Activated CD8-positive, alpha-beta T cell treated with anti-CD3 and anti-CD28 coated beads for 36 hours (primary cell): ENCODE measurements at regions of chr11 and their contacts with region 1.

Region 1: DNA sequence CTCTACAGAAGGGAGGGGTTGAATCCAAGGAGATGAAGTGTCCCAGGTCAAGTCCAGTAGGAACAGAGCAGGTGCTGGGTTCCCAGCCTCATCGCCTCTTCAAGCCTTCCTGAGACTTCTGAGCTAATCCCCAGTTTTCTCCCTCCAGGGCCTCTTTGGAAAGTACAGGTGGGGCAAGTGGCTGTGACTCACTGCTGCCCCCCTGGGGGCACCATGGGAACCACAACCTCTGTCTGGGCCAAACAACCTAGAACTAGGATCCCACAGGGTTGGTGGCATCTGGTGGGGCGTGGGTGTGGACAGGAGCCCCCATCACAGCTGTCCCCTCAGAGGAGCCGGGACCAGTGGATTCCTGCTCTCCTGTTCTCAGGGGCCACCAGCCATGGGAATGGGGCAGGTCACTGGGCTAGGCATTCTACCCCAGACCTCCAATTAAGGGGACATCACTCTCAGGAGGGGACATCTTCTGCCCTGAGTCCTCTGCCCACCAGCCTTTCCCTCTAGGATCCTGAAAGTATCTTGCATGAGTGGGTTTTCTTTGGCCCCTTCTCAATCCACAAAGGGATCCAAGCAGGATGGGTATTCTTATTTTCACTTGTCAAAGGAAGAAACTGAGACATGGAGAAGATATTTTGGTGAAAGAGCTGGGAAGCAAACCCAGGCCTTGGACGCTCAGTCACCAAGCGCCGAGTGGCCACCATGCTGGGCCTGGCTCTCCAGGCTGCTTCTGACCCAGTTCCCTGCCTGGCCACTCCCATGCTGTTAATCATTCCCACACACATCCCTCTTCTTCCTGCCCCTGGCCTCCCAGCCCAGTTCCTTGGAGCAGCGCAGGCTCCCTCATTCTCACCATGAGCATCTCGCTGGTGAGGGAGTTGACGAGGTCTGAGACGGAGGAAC is 23.8 kb downstream of the LRRC10B start:
- DNase-seq: peak; percentile 62
- ATAC-seq: peak; percentile 94
- H3K4me3 Mint-ChIP-seq: no peak overlapping the region
- H3K27ac Mint-ChIP-seq: no peak overlapping the region
- H3K4me1 Mint-ChIP-seq: no peaks in the 10 kb centered on the region
- H3K27me3 Mint-ChIP-seq: peaks cover 14% of the 10 kb centered on the region
- CTCF ChIP-seq: peak; percentile 84

Region 2: DNA sequence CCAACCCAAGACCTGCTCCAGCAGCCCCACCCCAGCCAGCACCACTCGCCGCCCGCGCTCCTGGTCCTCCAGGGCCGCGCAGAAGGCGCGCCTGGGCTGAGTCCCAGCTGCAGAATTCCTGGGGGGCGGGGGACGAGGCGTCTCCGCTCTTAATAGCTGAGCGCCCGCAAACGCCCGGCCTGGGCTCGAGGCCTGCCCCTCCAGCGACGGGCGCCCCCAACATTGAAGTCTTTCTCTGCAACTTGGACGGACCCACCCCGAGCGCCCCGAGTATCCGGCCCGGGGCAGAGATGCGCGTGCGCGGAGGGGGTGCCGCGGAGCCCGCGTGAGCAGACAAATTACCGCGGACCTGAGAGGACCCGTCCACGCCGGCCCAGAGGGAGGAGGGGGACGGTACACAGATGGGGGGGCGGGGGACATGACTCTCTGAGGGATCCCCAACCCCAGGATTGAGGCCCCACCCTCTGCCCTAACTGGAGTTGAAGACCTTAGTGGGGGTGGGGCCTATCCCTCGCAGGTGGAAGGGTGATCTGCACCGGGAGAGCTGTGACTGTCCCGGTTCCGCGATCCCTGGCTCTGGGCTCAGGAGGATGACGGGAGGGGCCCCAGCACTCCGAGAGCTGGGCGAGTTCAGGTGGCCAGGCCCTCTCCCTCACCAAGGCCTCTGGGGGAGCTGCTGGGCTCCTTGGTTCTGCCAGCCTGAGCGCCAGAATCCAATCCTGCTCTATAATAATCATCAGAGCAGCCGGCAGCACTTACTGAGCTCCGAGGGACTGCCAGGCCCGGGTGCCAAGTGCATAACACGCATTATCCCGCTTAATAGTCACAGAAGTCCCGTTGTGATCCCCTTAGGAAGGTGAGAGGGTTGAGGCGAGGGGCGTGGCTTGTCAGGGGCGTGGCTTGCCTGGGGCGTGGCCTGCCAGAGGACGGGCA is 55.4 kb after region 1 on chr11:
- CTCF ChIA-PET with region 1: interaction called, 11 read pairs
- POLR2A ChIA-PET with region 1: no interaction called
- intact Hi-C with region 1: no loop called
- DNase-seq: peak; percentile 73
- ATAC-seq: peak; percentile 84
- H3K4me3 Mint-ChIP-seq: peak overlapping the region; percentile 24
- H3K27ac Mint-ChIP-seq: no peak overlapping the region
- H3K4me1 Mint-ChIP-seq: peaks cover 11% of the 10 kb centered on the region
- H3K27me3 Mint-ChIP-seq: peaks cover 16% of the 10 kb centered on the region
- CTCF ChIP-seq: no peak